A549 (cell line): ENCODE measurements at regions of chr10 and their contacts with region 1.

Region 1: DNA sequence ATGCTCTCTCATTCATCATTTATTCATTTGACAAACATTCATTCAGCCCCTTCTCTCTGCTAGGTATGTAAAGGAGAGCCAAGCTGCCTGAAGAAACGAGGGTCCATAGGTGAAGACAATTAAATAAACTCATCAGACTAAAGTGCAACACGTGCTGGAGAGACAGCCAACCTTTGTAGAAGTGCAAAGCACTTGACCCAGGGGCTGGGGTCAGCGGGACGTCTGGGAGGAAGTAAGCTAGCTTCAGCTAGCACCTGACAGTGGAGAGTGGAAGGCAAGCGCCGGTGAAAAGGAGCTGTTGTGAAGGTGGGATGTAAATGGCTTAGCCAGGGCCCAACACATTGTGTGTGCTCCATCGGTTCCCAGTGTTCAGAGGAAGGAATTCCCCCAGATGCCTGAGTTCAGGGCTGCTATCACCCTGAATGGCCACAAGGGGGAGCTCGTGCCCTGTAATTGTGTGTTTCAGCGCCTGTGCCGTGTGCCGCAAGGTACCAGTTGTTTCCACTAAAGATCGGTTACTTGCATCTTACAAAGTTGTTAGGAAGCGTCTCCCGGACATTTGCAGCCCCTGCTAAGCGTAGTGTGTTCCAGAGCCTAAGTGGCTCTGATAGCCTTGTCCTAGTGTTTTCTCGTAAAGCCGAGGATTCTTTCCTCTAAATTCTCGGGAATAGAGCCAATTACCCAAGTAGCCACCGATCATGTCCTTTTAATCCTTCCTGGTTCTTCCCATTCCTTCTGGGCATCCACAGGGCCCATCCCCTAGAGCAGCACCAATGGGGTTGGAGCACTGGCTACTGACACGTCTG is 30.6 kb downstream of the TLX1 start:
- DNase-seq: peak; percentile 80 to 87
- ATAC-seq: peak; percentile 94 to 96
- H3K4me3 ChIP-seq: peak overlapping the region; percentile 44
- H3K27ac ChIP-seq: peak overlapping the region in 1 of 2 experiments; percentile 49; a peak in 1 of 6 replicates
- H3K4me1 ChIP-seq: 0 out of 3 replicates have a peak, but pooled peaks cover 6% of the 10 kb centered on the region
- CTCF ChIP-seq: peak; percentile 95
- EP300 ChIP-seq: no peak
- POLR2A ChIP-seq: no peak
- RAD21 ChIP-seq: peak; percentile 90 to 91

Region 2: DNA sequence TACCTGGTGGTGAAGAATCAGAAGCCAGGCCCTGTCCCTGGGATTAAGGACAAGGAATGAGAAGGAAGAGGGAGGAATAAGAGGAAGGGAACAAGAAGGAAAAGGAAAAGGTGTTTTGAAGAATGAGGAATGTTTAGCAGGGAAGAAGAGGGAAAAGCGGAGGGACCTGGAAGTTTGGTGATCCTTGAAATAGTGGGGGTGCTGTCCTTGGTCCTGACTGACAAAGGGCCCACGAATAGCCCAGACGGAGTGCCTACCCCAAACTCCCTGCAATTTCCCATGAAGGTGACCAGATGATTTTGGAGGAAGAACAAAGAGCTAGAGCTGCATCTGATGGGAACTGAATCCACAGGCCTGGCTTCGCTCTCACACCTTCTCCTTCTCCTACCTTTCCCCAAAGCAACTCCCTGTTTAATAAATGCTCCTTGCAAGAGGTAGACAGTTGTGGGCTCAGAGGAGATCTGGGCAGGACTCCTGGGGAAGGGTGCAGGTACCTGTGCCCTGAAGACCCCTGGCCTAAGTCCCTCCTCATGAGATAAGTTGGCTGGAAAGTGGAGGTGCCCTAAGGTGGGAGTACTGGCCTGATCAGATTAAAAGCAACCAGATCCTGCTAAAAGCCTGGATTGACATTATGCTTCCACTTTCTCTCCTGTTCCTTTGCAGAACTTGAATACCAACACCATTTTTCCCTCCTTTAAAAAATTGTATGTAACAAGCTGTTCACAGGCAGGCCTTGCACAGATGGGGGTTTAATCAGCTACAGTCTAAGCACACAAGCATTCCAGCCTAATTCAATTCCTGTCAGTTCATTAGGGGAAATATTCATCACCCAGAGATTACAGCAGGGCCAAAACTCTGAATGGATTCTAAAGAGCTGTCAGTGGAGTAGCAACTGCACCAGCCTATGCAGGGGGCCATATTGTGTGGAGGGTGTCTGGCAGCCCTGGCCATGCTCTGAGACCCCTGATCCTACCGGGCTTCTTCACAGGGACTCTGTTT is 80.5 kb before region 1 on chr10:
- CTCF ChIA-PET with region 1: no interaction called
- POLR2A ChIA-PET with region 1: no interaction called
- DNase-seq: no peak
- ATAC-seq: peak; percentile 23 to 41; a peak in 1 of 6 replicates
- H3K4me3 ChIP-seq: no peak overlapping the region
- H3K27ac ChIP-seq: no peak overlapping the region
- H3K4me1 ChIP-seq: no peaks in the 10 kb centered on the region
- CTCF ChIP-seq: no peak
- EP300 ChIP-seq: no peak
- POLR2A ChIP-seq: no peak
- RAD21 ChIP-seq: no peak

Region 3: DNA sequence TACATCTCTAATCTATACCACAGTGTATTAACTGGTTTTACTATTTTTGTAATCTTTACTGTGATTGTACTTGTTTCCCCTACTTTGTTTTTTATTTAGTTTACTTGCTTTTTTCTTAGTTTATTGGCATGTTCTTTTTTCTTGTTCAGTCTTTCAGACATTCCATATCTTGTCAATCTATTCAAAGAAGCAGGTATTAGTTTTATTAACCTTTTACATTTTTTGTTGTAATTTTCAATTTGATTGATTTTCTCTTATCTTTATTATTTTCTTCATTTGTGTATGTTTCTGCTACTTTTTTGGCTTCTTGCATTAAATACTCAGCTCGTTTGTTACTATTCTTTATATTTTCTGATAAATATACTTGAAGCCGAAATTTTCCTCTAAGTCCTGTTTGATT is 11.0 kb after region 1 on chr10:
- CTCF ChIA-PET with region 1: interaction called, 11 read pairs
- POLR2A ChIA-PET with region 1: no interaction called
- DNase-seq: no peak
- ATAC-seq: no peak
- H3K4me3 ChIP-seq: no peak overlapping the region
- H3K27ac ChIP-seq: no peak overlapping the region
- H3K4me1 ChIP-seq: no peaks in the 10 kb centered on the region
- CTCF ChIP-seq: no peak
- EP300 ChIP-seq: no peak
- POLR2A ChIP-seq: no peak
- RAD21 ChIP-seq: no peak